ENCODE measurements at regions of chr5 and their contacts with region 1.

Region 1: DNA sequence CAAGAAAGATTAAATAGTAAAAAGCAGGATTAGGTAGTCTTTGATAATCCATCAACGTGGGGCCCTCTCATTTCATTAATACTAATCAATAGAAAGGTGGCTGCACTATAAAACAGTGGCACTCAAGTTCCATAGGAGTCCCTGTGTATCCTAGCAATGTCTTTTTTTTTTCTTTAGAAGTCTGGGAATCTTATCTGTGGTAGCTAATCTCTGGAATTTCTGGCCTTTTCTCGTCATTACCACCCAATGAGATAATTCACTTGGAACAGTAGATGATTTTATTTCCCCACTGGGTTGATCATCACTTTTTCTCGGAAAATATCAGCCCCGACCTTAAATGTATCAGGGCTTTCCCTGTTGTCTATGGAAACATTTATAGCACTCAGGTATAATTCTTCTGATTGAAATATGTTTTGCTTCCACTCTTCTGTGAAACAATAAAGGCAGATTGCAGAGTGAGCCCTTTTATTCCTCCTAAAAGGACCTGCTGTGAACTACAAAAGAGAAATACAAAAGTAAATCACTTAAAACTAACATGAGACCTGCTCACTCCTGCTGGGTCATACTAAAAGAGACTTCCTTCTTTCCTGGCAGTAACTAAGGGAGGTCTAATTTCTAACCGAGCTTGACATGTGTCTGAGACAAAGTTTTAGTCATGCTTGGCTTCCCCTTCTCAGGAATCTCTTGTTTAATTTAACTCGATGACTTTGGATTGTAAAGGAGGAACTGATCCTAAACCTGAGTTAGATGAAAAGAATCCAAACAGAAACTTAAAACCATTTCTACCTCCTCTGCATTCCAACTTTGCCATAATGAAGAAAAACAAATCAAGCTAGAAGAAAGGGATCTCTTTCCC is 86.6 kb upstream of the CDH6 start:
- DNase-seq: peak in 1 of 2 experiments; percentile 8
- H3K4me3 ChIP-seq: no peak overlapping the region
- H3K4me3 Mint-ChIP-seq: peak overlapping the region; percentile 12
- H3K27ac Mint-ChIP-seq: peak overlapping the region; percentile 85
- H3K4me1 ChIP-seq: peaks cover 26% of the 10 kb centered on the region
- H3K4me1 Mint-ChIP-seq: peaks cover 23% of the 10 kb centered on the region
- H3K27me3 ChIP-seq: no peaks in the 10 kb centered on the region
- H3K27me3 Mint-ChIP-seq: no peaks in the 10 kb centered on the region
- CTCF ChIP-seq: no peak

Region 2: DNA sequence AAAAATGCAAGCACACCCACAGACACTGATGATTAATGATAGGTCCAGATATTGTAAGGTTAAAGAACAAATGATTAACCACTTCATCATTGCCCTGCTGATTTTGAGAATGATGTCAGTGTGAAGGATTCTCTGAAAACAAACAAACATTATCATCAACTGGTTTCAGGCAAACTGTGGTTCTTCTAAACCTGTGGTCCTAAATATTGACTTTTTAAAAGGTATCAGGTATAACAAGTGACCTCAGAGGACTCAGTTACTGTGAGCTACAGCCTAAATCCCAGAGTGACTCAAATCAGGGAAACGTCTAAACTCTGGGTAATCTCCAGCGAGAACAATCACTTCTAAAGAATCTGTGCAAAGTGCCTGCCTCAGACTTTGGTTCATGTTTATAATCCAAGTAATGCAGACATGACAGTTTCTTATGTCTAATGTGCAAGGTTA is 85.7 kb before region 1 on chr5:
- CTCF ChIA-PET with region 1: no interaction called
- POLR2A ChIA-PET with region 1: no interaction called
- intact Hi-C with region 1: loop called (anchors 5 kb)
- DNase-seq: peak; percentile 49 to 53
- H3K4me3 ChIP-seq: no peak overlapping the region
- H3K4me3 Mint-ChIP-seq: no peak overlapping the region
- H3K27ac Mint-ChIP-seq: peak overlapping the region; percentile 68
- H3K4me1 ChIP-seq: peaks cover 44% of the 10 kb centered on the region
- H3K4me1 Mint-ChIP-seq: peaks cover 10% of the 10 kb centered on the region
- H3K27me3 ChIP-seq: no peaks in the 10 kb centered on the region
- H3K27me3 Mint-ChIP-seq: no peaks in the 10 kb centered on the region
- CTCF ChIP-seq: no peak

Region 3: DNA sequence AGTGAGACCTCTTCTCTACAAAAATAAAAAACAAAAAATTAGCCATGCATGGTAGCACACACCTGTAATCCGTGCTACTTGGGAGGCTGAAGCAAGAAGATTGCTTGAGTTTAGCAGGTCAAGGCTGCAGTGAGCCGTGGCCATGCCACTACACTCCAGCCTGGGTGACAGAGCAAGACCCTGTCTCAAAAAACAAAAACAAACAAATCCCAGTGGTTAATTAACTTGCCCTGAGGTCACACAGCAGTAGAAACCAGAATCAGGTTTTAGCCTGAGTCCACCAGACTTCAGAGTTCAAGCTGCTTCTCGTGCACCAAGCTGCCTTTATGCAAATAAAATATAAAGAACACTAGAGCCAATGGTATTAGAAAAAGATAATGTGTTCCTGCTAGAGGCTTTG is 897.5 kb after region 1 on chr5:
- CTCF ChIA-PET with region 1: no interaction called
- POLR2A ChIA-PET with region 1: no interaction called
- intact Hi-C with region 1: no loop called
- DNase-seq: no peak
- H3K4me3 ChIP-seq: no peak overlapping the region
- H3K4me3 Mint-ChIP-seq: no peak overlapping the region
- H3K27ac Mint-ChIP-seq: no peak overlapping the region
- H3K4me1 ChIP-seq: no peaks in the 10 kb centered on the region
- H3K4me1 Mint-ChIP-seq: no peaks in the 10 kb centered on the region
- H3K27me3 ChIP-seq: no peaks in the 10 kb centered on the region
- H3K27me3 Mint-ChIP-seq: no peaks in the 10 kb centered on the region
- CTCF ChIP-seq: no peak

Measured in Caco-2 (cell line).